RWPE1 (cell line): ENCODE measurements at regions of chr7 and their contacts with region 1.

Region 1: GRCh38 chr7:1175967-1176851 is 16.2 kb upstream of the ZFAND2A start:
- DNase-seq: peak; percentile 71
- H3K27ac ChIP-seq: peak overlapping the region; percentile 44
- CTCF ChIP-seq: peak; percentile 96

Region 2: DNA sequence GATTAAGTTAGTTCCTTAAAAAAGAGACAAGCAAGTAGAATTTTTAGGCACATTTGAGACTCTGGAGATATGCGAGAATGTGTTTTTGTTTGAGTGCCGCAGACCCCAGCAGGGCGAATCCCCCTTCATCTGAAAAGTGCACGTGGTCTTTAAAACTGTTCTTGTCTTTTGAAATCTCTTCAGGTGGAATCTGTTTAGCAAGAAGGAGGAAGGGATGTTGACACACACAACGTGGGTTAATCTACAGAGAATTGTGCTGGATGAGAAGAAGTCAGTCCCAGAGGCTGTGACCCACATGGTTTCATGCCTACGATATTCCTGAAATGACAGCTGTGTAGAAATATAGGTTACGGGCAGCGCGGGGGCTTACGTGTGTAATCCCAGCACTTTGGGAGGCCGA is 10.9 kb after region 1 on chr7:
- CTCF ChIA-PET with region 1: interaction called, 15 read pairs
- POLR2A ChIA-PET with region 1: no interaction called
- DNase-seq: no peak
- H3K27ac ChIP-seq: no peak overlapping the region
- CTCF ChIP-seq: no peak

Region 3: GRCh38 chr7:2732959-2733584 is 1556.9 kb after region 1 on chr7:
- CTCF ChIA-PET with region 1: no interaction called
- POLR2A ChIA-PET with region 1: no interaction called
- DNase-seq: peak; percentile 32
- H3K27ac ChIP-seq: peak overlapping the region; percentile 44
- CTCF ChIP-seq: no peak